ENCODE measurements at regions of chr5 and their contacts with region 1.

Region 1: DNA sequence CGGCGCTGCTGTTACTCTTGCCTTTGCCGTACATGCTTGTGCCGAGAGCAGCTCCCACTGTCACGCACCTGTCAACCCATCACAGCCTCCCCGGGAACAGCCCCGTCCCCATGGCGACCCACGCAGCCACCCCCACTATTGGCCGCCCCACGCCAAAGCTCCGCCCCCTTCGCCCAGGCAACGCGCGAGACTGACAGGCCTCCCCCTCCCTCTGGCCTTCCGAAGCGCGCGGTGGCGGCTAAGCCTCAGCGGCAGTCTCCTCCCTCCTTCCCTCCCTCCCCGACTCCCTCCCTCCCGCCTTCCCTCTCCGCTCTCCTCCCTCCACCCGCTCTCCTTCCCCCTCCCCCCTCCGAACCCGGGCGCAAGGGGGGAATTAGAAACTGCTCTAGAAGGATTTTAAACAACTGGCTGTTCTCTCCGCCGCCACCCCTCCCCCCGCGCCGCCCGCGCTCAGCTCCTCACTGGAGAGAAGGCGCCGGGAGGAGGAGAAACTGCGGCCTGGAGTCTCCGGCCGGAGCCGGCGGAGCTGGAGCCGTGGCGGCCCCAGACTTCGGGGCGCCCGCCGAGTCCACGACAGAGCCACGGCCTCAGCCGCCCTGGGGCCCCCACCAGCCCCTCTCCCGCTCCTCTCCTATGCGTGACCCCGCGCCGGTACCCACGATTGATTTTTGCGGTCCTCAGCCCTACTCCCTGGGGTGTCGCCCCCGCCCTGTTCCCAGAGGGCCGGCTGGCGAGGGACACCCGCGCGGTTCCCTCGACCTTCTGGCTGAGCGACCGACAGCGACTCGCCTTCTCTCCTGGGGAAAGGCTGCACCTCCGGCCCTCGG is at the start of gene SSBP2:
- DNase-seq: peak; percentile 99
- ATAC-seq: peak; percentile 86
- H3K4me3 Mint-ChIP-seq: peak within 1 kb of the TSS; percentile 92
- H3K27ac Mint-ChIP-seq: peak within 1 kb of the TSS; percentile 91
- H3K4me1 Mint-ChIP-seq: peaks cover 20% of the 10 kb centered on the region
- H3K27me3 Mint-ChIP-seq: peaks cover 30% of the 10 kb centered on the region
- total RNA-seq, gene SSBP2: 32.5 to 35.4 TPM

Region 2: DNA sequence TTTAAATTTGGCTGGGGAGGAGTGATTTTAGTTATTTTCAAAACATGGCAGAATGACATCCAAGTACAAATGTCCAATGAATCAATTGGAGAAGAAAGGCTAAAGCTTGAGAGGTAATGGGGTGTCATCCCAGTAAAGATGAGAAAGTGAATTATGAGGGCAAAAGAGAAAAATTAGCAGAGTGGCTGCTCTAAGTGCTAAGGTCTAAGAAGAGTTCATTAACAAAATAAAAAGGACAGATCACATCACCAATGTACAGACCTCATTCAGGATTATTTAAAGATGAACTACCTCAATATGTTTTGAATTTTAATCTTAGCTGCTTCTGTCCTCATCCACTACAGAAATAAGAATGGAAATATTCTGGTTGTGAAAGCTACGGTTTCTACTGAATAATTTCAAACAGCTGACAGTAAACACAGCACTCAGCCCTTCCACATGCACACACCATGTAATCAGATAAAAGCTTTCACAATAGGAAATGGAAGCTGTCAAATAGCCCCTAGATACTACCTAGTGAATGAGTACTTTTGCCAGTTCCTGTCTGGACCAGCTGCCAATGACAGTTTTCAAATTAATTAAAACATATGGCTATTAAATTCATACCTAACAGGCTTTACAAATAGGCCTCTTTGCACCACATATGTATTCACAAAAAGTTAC is 171.8 kb before region 1 on chr5:
- POLR2A ChIA-PET with region 1: no interaction called
- DNase-seq: no peak
- ATAC-seq: peak; percentile 22
- H3K4me3 Mint-ChIP-seq: no peak overlapping the region
- H3K27ac Mint-ChIP-seq: no peak overlapping the region
- H3K4me1 Mint-ChIP-seq: peaks cover 5% of the 10 kb centered on the region
- H3K27me3 Mint-ChIP-seq: no peaks in the 10 kb centered on the region

Region 3: DNA sequence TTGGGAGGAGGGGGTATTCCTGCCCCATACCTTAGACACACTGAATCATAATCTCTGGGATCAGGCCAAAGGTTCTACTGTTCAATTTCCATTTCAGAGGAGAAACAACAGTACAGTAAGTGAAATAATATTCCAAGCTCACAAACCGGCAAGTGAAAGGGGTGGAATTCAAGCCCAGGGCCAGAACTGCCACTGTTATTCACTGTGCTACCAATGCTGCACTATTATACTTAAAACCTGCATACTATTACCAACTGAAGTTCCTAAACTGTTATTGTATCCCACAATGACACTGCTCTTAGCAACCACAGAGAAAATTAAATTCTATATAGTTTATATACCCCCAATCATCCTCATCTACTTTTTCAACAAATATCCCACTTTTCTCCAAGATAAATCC is 24.9 kb before region 1 on chr5:
- POLR2A ChIA-PET with region 1: no interaction called
- DNase-seq: no peak
- ATAC-seq: no peak
- H3K4me3 Mint-ChIP-seq: no peak overlapping the region
- H3K27ac Mint-ChIP-seq: no peak overlapping the region
- H3K4me1 Mint-ChIP-seq: peaks cover 2% of the 10 kb centered on the region
- H3K27me3 Mint-ChIP-seq: no peaks in the 10 kb centered on the region

Region 4: DNA sequence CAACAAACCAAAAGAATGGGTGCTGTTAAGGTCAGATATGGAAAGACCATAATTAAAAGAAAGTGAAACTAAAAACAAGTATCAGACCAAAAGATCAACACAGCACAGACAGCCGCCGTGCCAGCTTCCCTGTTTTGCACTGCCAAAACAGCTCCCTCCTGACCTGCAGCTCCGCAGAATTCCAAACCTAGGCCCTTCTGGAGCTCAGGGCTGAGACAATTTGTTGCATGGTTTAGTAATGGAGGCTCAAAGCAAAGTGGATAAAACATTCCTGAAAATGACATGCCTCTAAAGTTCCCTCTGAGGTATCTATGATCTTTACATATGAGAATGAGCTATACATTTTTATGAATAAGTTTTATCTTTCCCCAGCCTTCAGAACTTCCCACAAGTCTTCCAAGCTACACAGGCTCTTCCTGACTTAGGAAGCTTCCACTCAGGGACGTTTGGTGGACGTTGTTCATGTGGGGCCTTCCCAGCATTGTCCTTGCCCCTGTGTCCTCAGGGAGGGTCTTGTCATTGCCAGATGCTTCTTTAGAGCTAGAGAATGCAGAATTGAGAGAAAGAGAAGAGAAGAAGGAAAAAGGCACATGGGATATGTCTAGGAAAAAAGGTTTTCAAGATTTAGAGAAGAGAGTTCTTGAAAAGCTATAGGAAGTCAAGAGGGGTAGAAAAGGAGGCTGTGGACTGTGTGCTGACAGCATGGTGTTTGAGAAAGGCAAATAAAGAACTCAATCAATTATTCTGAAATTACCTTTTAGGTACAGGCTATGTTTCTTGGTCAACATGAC is 28.1 kb after region 1 on chr5:
- POLR2A ChIA-PET with region 1: interaction called, 22 read pairs
- DNase-seq: peak; percentile 51
- ATAC-seq: peak; percentile 84
- H3K4me3 Mint-ChIP-seq: peak overlapping the region; percentile 77
- H3K27ac Mint-ChIP-seq: peak overlapping the region; percentile 86
- H3K4me1 Mint-ChIP-seq: peaks cover 20% of the 10 kb centered on the region
- H3K27me3 Mint-ChIP-seq: no peaks in the 10 kb centered on the region

Region 5: GRCh38 chr5:81800797-81801196 is 49.6 kb after region 1 on chr5:
- POLR2A ChIA-PET with region 1: no interaction called
- DNase-seq: no peak
- ATAC-seq: no peak
- H3K4me3 Mint-ChIP-seq: no peak overlapping the region
- H3K27ac Mint-ChIP-seq: no peak overlapping the region
- H3K4me1 Mint-ChIP-seq: peaks cover 5% of the 10 kb centered on the region
- H3K27me3 Mint-ChIP-seq: peaks cover 2% of the 10 kb centered on the region

Region 6: GRCh38 chr5:81971712-81972495 is 220.7 kb after region 1 on chr5 and contains the start of gene ATG10:
- POLR2A ChIA-PET with region 1: interaction called, 12 read pairs
- DNase-seq: peak; percentile 94
- ATAC-seq: peak; percentile 96
- H3K4me3 Mint-ChIP-seq: peak within 1 kb of the TSS; percentile 88
- H3K27ac Mint-ChIP-seq: peak within 1 kb of the TSS; percentile 95
- H3K4me1 Mint-ChIP-seq: peaks cover 27% of the 10 kb centered on the region
- H3K27me3 Mint-ChIP-seq: no peaks in the 10 kb centered on the region
- total RNA-seq, gene ATG10: 11.5 to 12.4 TPM

Region 7: GRCh38 chr5:82147865-82148573 is 396.8 kb after region 1 on chr5:
- POLR2A ChIA-PET with region 1: no interaction called
- DNase-seq: no peak
- ATAC-seq: no peak
- H3K4me3 Mint-ChIP-seq: no peak overlapping the region
- H3K27ac Mint-ChIP-seq: no peak overlapping the region
- H3K4me1 Mint-ChIP-seq: no peaks in the 10 kb centered on the region
- H3K27me3 Mint-ChIP-seq: no peaks in the 10 kb centered on the region

Measured in activated naive CD8-positive, alpha-beta T cell treated with anti-CD3 and anti-CD28 coated beads, Interleukin-2, amount 10 ng/mL, durations not matched to agents 7 days and 5 days (primary cell).